Activated CD4-positive, alpha-beta memory T cell treated with anti-CD3 and anti-CD28 coated beads, Interleukin-2, amount 10 ng/mL, durations not matched to agents 7 days and 5 days (primary cell): ENCODE measurements at regions of chr15 and their contacts with region 1.

Region 1: DNA sequence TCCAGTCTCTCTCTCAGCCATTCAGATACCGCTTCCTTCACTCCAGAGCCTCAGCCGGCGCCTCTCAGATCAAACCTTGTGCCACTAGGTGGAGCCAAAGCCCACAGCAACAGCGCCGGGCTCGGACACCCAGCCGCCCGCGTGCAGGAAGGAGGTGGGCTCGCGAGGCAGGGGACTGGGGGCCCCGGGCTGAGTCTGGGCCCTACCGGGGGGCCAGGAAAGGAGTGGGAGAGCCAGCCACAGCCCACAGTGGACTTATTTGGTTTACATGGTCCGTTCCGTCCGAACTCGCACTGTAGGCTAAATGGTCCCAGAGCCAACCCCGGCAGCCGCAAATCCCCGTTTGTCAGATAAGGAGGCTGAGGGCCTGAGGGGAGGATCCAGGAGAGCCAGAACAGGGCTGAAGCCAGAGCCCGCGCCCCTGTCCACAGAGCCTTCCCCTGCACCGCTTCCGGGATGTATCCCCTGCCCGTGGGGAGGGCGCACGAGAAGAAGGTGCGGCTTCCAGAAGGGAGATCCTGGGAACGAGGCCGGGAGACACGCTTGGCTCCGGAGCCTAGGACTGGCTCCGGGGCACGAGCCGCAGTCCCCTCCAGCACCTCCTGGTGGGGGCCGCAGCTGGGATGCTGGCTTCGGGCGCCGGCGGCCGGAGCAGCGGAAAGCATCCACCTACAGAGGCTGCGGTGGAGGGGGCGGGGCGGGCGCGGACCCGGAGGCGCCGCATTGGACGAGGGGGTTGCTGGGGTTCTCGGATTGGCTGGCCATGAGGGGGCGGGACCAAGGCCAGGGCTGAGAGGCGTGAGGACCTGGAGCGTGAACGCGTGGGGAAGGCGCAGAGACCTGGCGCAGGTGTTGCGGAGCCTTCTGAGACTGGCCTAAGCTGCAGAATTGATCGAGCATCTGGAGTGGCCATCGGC is 6.5 kb upstream of the CYP11A1 start:
- DNase-seq: peak; percentile 96
- H3K4me3 Mint-ChIP-seq: peak overlapping the region; percentile 77
- H3K27ac Mint-ChIP-seq: peak overlapping the region; percentile 63
- H3K4me1 Mint-ChIP-seq: peaks cover 21% of the 10 kb centered on the region
- H3K27me3 Mint-ChIP-seq: peaks cover 31% of the 10 kb centered on the region

Region 2: GRCh38 chr15:74156678-74157411 is 217.1 kb before region 1 on chr15:
- CTCF ChIA-PET with region 1: no interaction called
- POLR2A ChIA-PET with region 1: no interaction called
- DNase-seq: no peak
- H3K4me3 Mint-ChIP-seq: no peak overlapping the region
- H3K27ac Mint-ChIP-seq: no peak overlapping the region
- H3K4me1 Mint-ChIP-seq: peaks cover 42% of the 10 kb centered on the region
- H3K27me3 Mint-ChIP-seq: peaks cover 20% of the 10 kb centered on the region

Region 3: DNA sequence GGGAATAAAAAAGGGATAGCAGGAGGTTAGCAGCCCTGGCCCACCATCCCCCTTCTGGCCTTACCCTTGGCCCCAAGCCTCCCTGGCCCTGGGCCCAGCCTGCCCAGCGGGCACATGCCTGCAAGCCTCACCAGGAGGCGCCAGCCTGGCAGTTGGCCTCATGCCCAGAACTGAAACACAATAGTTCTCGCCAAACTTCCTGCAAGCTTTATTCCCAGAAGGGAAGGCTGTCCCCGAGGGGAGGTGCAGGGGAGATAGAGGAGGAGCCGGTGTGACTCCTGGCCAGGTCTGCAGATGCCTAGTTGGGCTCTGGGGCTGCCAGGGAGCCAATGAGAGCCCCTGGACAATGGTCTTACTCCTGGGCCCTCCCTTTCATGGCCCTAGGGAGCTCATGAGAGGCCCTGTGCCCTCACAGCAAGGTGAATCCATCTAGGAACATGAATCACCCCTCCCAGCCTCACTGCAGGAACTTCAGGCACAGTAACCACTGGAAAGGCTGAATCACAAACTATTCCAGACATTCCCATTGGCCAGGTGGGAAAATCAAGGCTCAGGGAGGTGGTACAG is 133.9 kb before region 1 on chr15:
- CTCF ChIA-PET with region 1: no interaction called
- POLR2A ChIA-PET with region 1: no interaction called
- DNase-seq: no peak
- H3K4me3 Mint-ChIP-seq: no peak overlapping the region
- H3K27ac Mint-ChIP-seq: no peak overlapping the region
- H3K4me1 Mint-ChIP-seq: peaks cover 2% of the 10 kb centered on the region
- H3K27me3 Mint-ChIP-seq: peaks cover 19% of the 10 kb centered on the region

Region 4: DNA sequence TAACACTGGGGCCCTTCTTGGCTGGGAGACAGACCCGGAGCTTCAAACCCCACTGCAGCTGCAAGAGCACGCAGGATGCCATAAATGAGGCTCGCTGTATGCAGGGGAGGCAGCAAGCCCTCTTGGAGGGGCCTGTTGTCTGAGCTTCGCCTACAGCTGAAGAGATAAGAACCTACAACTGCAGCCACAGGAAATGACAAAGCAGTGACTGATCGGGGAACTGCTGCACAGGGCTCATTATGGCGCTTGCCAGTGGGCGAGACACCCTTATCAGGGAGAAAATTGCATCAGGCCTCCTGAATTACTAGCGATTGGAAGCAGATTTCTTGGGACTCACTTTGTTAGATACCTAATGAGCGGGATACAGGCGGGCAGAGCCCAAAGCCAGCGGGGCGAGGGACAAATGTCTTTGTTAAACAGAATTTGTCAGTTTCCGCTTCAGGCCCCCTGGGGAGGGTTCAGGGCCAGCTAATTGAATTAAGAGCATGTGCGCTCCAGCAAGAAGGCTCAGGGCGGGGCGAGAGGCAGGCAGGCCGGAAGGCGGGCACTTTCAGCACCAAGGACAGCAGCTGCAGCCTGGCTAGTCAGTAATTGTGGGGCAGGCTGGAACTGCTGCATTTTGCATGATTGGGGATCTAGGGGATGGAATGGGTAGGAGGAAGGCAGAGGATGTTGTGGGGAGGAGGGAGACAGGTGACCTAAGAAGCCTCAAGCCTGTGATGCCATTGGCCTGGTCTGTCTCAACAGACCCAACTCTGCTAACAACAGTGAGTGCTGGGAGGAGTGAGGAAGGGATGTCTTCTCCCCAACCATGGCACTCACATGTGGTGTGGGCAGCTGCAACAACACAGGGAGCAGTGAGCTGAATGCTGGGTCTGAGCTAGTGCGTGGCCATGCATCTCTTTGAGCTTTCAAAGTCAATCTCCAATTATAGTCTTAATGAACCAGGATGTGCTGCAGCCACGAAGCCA is 82.6 kb before region 1 on chr15:
- CTCF ChIA-PET with region 1: no interaction called
- POLR2A ChIA-PET with region 1: no interaction called
- DNase-seq: peak; percentile 83
- H3K4me3 Mint-ChIP-seq: no peak overlapping the region
- H3K27ac Mint-ChIP-seq: no peak overlapping the region
- H3K4me1 Mint-ChIP-seq: peaks cover 10% of the 10 kb centered on the region
- H3K27me3 Mint-ChIP-seq: peaks cover 18% of the 10 kb centered on the region

Region 5: GRCh38 chr15:74352393-74352910 is 21.5 kb before region 1 on chr15:
- CTCF ChIA-PET with region 1: no interaction called
- POLR2A ChIA-PET with region 1: no interaction called
- DNase-seq: no peak
- H3K4me3 Mint-ChIP-seq: no peak overlapping the region
- H3K27ac Mint-ChIP-seq: no peak overlapping the region
- H3K4me1 Mint-ChIP-seq: no peaks in the 10 kb centered on the region
- H3K27me3 Mint-ChIP-seq: peaks cover 34% of the 10 kb centered on the region

Region 6: DNA sequence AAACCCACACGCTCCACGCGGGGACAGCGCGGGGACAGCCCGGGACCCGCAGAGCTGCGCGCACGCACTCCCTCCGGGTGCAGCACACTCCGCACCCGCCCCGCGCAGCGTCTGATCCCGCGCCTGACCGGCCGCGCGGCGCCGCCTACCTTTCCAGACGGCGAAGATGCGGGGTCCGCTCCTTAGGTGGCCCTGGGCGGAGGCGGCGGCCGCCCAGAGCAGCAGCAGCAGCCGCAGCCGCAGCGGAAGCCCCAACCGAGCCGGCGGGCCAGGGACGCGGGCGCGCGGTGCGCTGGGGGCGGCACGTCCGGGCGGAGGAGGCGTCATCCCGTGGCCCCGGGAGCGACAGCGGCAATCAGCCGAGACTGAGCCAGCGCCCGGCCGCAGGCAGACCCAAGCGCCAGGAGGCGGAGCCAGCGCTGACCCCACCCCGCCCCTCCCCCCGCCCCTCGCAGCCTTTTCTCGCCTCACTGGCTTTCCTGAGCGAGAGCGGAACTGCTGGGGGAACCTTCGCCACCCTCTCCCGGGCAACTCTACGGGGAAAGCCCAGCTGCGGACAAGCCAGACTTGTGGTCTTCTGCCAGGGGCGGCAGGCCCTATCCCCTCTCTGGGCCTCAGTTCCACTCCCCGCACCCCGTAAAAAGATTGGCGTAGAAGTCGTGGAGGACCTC is 59.7 kb after region 1 on chr15 and contains the start of gene SEMA7A:
- CTCF ChIA-PET with region 1: interaction called, 248 read pairs
- POLR2A ChIA-PET with region 1: interaction called, 6 read pairs
- DNase-seq: peak; percentile 86
- H3K4me3 Mint-ChIP-seq: peak within 1 kb of the TSS; percentile 67
- H3K27ac Mint-ChIP-seq: peak within 1 kb of the TSS; percentile 33
- H3K4me1 Mint-ChIP-seq: peaks cover 35% of the 10 kb centered on the region
- H3K27me3 Mint-ChIP-seq: peaks cover 4% of the 10 kb centered on the region
- total RNA-seq, gene SEMA7A: 3.8 to 4.3 TPM

Region 7: GRCh38 chr15:74438721-74439316 is 64.8 kb after region 1 on chr15:
- CTCF ChIA-PET with region 1: interaction called, 248 read pairs
- POLR2A ChIA-PET with region 1: interaction called, 6 read pairs
- DNase-seq: peak; percentile 84
- H3K4me3 Mint-ChIP-seq: no peak overlapping the region
- H3K27ac Mint-ChIP-seq: no peak overlapping the region
- H3K4me1 Mint-ChIP-seq: peaks cover 19% of the 10 kb centered on the region
- H3K27me3 Mint-ChIP-seq: no peaks in the 10 kb centered on the region